CD8-positive, alpha-beta T cell (primary cell): ENCODE measurements at regions of chr7 and their contacts with region 1.

Region 1: GRCh38 chr7:14419531-14419930 is 430.1 kb upstream of the ETV1 start:
- DNase-seq: no peak
- ATAC-seq: no peak
- H3K4me3 ChIP-seq: no peak overlapping the region
- H3K4me3 Mint-ChIP-seq: no peak overlapping the region
- H3K27ac ChIP-seq: no peak overlapping the region
- H3K27ac Mint-ChIP-seq: no peak overlapping the region
- H3K4me1 ChIP-seq: no peaks in the 10 kb centered on the region
- H3K4me1 Mint-ChIP-seq: no peaks in the 10 kb centered on the region
- H3K27me3 ChIP-seq: no peaks in the 10 kb centered on the region
- H3K27me3 Mint-ChIP-seq: no peaks in the 10 kb centered on the region
- CTCF ChIP-seq: no peak

Region 2: GRCh38 chr7:14309432-14309831 is 110.1 kb before region 1 on chr7:
- CTCF ChIA-PET with region 1: no interaction called
- POLR2A ChIA-PET with region 1: no interaction called
- intact Hi-C with region 1: no loop called
- DNase-seq: no peak
- ATAC-seq: no peak
- H3K4me3 ChIP-seq: no peak overlapping the region
- H3K4me3 Mint-ChIP-seq: no peak overlapping the region
- H3K27ac ChIP-seq: no peak overlapping the region
- H3K27ac Mint-ChIP-seq: no peak overlapping the region
- H3K4me1 ChIP-seq: no peaks in the 10 kb centered on the region
- H3K4me1 Mint-ChIP-seq: no peaks in the 10 kb centered on the region
- H3K27me3 ChIP-seq: no peaks in the 10 kb centered on the region
- H3K27me3 Mint-ChIP-seq: no peaks in the 10 kb centered on the region
- CTCF ChIP-seq: no peak

Region 3: GRCh38 chr7:14377646-14378266 is 41.8 kb before region 1 on chr7:
- CTCF ChIA-PET with region 1: no interaction called
- POLR2A ChIA-PET with region 1: no interaction called
- intact Hi-C with region 1: loop called in 1 of 2 experiments (anchors 1 kb)
- DNase-seq: no peak
- ATAC-seq: no peak
- H3K4me3 ChIP-seq: no peak overlapping the region
- H3K4me3 Mint-ChIP-seq: no peak overlapping the region
- H3K27ac ChIP-seq: no peak overlapping the region
- H3K27ac Mint-ChIP-seq: no peak overlapping the region
- H3K4me1 ChIP-seq: no peaks in the 10 kb centered on the region
- H3K4me1 Mint-ChIP-seq: no peaks in the 10 kb centered on the region
- H3K27me3 ChIP-seq: no peaks in the 10 kb centered on the region
- H3K27me3 Mint-ChIP-seq: no peaks in the 10 kb centered on the region
- CTCF ChIP-seq: no peak